BJ (cell line): ENCODE measurements at regions of chr5 and their contacts with region 1.

Region 1: GRCh38 chr5:142699184-142699720 is 13.4 kb upstream of the FGF1 start:
- DNase-seq: no peak
- H3K4me3 ChIP-seq: no peak overlapping the region
- H3K27me3 ChIP-seq: no peaks in the 10 kb centered on the region
- CTCF ChIP-seq: peak; percentile 95

Region 2: GRCh38 chr5:142548739-142549275 is 150.4 kb before region 1 on chr5:
- CTCF ChIA-PET with region 1: interaction called, 11 read pairs
- POLR2A ChIA-PET with region 1: no interaction called
- DNase-seq: peak; percentile 85
- H3K4me3 ChIP-seq: no peak overlapping the region
- H3K27me3 ChIP-seq: no peaks in the 10 kb centered on the region
- CTCF ChIP-seq: peak; percentile 84

Region 3: DNA sequence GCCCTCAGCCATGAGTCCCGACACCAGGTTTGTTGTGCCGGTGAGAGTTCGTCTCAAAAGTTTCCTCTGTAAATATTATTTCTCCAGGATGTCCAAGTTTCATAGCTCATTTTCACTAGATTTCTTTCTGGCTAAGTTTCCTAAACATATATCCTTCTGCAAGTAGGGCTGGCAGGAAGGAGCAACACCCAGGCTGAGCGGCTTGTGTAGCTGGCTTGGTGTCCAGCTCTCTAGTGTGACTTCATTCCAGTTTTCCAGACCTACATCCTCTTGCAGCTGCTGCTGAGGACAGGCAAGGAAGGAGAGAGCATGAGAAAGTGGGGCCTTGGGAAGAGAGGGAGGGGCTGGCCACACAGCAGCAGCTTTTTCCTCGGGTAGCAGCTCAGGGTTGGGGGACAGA is 93.6 kb before region 1 on chr5:
- CTCF ChIA-PET with region 1: interaction called, 162 read pairs
- POLR2A ChIA-PET with region 1: no interaction called
- DNase-seq: no peak
- H3K4me3 ChIP-seq: no peak overlapping the region
- H3K27me3 ChIP-seq: no peaks in the 10 kb centered on the region
- CTCF ChIP-seq: no peak

Region 4: GRCh38 chr5:142618130-142618523 is 81.1 kb before region 1 on chr5:
- CTCF ChIA-PET with region 1: interaction called, 162 read pairs
- POLR2A ChIA-PET with region 1: no interaction called
- DNase-seq: no peak
- H3K4me3 ChIP-seq: no peak overlapping the region
- H3K27me3 ChIP-seq: no peaks in the 10 kb centered on the region
- CTCF ChIP-seq: no peak

Region 5: GRCh38 chr5:142644640-142645361 is 54.5 kb before region 1 on chr5:
- CTCF ChIA-PET with region 1: interaction called, 385 read pairs
- POLR2A ChIA-PET with region 1: no interaction called
- DNase-seq: peak; percentile 99
- H3K4me3 ChIP-seq: no peak overlapping the region
- H3K27me3 ChIP-seq: no peaks in the 10 kb centered on the region
- CTCF ChIP-seq: no peak

Region 6: DNA sequence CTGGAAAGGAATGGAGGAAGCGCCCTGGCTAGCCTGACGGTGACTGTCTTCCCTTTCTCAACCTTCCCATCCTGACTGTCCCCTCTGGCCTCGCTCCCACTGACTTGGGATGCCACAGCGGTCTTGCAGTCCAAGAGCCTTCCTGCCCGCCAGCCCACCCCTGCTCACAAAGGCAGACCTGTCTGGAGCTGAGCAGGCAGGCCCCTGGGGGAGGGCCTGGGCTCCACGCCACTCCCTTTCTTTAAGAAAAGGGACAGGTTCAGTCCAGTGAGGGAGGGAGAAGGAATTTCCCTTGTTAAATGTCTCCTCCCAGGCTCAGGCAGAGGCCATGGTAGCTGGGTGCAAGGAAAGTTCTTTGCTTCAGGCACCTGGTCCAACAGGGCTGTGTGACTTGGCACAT is 31.4 kb before region 1 on chr5:
- CTCF ChIA-PET with region 1: interaction called, 44 read pairs
- POLR2A ChIA-PET with region 1: no interaction called
- DNase-seq: no peak
- H3K4me3 ChIP-seq: no peak overlapping the region
- H3K27me3 ChIP-seq: no peaks in the 10 kb centered on the region
- CTCF ChIP-seq: no peak

Region 7: GRCh38 chr5:142685418-142686209 is 13.6 kb before region 1 on chr5 and contains the start of gene FGF1:
- CTCF ChIA-PET with region 1: interaction called, 12 read pairs
- POLR2A ChIA-PET with region 1: no interaction called
- DNase-seq: no peak
- H3K4me3 ChIP-seq: no peak within 1 kb of the TSS
- H3K27me3 ChIP-seq: peaks cover 2% of the 10 kb centered on the region; the same call in 1 of the 2 replicates
- CTCF ChIP-seq: no peak
- polyA plus RNA-seq, gene FGF1: 14.8 and 19.2 TPM in 2 replicates